ENCODE measurements at regions of chr1 and their contacts with region 1.

Region 1: GRCh38 chr1:67814121-67814772 is 19.0 kb downstream of the GNG12 start:
- DNase-seq: peak; percentile 72
- H3K4me3 ChIP-seq: no peak overlapping the region
- H3K27ac ChIP-seq: peak overlapping the region; percentile 36
- H3K4me1 ChIP-seq: peaks cover 56% of the 10 kb centered on the region
- H3K27me3 ChIP-seq: no peaks in the 10 kb centered on the region
- CTCF ChIP-seq: no peak
- POLR2A ChIP-seq: no peak

Region 2: DNA sequence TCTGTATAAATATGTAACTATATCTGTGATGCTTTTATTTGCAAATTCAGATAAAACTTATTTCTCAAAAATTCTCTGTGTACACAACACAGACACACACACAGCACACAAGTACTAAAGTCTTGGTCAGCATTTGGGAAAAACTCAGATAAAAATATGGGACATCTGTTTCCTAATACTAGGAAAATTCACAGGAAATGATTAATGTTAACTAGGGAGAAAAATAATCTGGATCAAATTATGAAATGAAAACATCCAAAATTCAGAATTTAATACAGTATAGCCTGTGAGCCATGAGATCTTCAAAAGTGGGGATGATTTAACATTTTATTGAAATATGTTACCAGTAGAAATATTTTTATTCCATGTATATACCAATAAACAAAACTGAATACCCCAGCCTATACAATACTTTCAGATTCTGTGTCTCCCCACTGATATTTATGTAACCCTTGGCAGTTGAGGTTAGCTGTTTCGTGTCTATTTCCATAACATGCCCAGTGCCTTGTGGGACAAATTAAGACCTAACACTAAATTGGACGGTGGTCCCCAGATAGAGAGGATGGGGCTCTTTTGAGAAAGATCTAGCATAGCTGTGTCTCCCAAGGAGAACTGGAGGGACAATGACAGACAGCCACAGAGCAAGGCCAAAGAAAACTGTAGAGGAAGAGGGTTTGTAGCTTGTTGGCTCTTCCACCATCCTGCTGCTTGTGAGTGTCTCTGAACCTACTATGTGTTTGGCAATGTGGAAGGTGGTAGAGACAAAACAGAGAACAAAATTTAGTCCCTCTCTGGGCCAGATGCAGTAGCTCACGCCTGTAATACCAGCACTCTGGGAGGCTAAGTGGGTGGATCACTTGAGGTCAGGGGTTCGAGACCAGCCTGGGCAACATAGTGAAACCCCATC is 28.1 kb before region 1 on chr1:
- CTCF ChIA-PET with region 1: interaction called, 3 read pairs
- POLR2A ChIA-PET with region 1: interaction called, 10 read pairs
- dilution Hi-C with region 1: no loop called
- intact Hi-C with region 1: no loop called
- DNase-seq: peak; percentile 84
- H3K4me3 ChIP-seq: no peak overlapping the region
- H3K27ac ChIP-seq: peak overlapping the region; percentile 91
- H3K4me1 ChIP-seq: peaks cover 61% of the 10 kb centered on the region
- H3K27me3 ChIP-seq: no peaks in the 10 kb centered on the region
- CTCF ChIP-seq: no peak
- POLR2A ChIP-seq: no peak

Measured in endothelial cell of umbilical vein (primary cell).